ENCODE measurements at regions of chr20 and their contacts with region 1.

Region 1: DNA sequence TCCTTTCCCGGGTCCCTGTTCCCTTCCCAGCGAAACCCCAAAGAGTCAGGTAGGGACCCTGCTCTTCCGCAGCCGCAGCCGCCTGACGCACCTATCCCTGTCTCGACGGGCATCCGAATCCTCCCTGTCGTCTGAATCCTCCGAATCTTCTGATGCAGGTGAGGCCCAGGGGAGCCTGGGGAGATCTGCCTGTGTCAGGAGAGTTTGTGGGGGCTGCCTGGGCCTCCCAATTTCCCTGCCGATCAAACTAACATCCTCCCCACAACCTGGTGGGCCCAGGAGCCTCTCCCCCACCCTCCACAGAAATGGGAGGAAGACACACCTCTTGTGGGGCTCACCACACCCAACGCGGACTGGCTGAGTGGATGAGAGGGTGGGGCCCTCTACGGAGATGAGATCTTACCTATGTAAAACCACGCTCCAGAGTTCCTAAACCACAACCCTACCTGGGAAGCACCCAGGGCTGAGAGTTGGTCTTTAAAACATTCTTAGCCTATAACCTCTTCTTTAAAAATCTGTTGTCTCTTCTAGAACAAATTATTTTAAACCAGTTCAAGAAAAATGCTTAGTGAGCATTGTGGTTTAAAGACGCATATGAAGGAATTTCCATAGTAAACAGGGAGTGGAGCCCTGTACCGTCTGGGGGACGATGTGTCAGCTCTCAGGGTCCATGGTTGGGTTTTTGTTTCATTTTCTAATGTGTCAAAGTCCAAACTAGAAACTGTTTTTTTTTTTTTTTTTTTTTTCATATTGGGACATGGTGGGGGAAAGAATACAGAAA is 1.7 kb downstream of the CDC25B start:
- DNase-seq: peak; percentile 67
- ATAC-seq: no peak
- H3K4me3 ChIP-seq: peak overlapping the region; percentile 82
- H3K27ac ChIP-seq: peak overlapping the region; percentile 86
- H3K4me1 ChIP-seq: peaks cover 26% of the 10 kb centered on the region
- H3K27me3 ChIP-seq: no peaks in the 10 kb centered on the region
- CTCF ChIP-seq: no peak
- POLR2A ChIP-seq: no peak
- RAD21 ChIP-seq: no peak

Region 2: DNA sequence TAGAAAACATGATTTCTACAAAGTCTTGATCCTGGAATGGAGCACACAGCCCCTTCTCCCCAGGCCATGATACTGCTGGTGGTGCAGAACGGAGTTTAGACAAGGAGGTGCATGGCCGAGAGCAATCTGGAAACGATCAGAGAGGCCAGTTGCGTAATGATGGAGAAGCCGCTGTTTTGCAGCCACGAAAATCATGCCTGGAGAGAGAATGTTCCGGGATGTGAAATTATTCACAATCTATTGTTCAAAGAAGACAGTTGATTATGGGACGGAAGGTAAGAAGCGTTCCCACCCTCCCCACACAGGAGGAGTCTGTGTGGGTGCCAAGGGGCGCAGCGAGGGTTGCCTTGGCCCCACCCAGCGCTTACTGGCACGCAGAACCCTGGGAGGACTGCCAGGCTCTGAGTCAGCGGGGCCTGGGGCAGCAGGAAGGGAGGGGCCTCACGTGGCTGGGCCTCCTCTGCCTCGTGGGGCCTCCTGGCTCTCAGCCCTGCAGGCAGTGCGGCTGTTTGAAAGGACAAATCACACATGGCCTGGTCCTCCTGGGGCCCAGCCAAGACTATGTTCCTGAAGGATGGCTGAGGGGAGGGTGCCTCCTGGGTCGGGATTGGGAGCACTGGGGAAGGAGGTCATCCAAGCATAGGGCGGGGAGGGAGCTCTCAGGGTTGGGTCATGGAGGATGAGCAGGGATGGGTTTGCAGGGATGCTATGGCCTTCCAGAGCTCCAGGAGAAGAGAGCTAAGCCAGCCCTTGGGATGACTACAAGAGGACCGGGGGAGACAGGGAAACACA is 13.9 kb after region 1 on chr20:
- CTCF ChIA-PET with region 1: no interaction called
- POLR2A ChIA-PET with region 1: interaction called, 3 read pairs
- dilution Hi-C with region 1: no loop called
- in situ Hi-C with region 1: no loop called
- intact Hi-C with region 1: loop called (anchors 2 kb)
- DNase-seq: peak; percentile 99
- ATAC-seq: peak; percentile 70
- H3K4me3 ChIP-seq: peak overlapping the region; percentile 14; the same call in 1 of the 2 replicates
- H3K27ac ChIP-seq: peak overlapping the region; percentile 91
- H3K4me1 ChIP-seq: peaks cover 25% of the 10 kb centered on the region
- H3K27me3 ChIP-seq: no peaks in the 10 kb centered on the region
- CTCF ChIP-seq: no peak
- POLR2A ChIP-seq: 0 out of 2 replicates have a peak, but pooled peaks have one; percentile 64
- RAD21 ChIP-seq: no peak

Region 3: DNA sequence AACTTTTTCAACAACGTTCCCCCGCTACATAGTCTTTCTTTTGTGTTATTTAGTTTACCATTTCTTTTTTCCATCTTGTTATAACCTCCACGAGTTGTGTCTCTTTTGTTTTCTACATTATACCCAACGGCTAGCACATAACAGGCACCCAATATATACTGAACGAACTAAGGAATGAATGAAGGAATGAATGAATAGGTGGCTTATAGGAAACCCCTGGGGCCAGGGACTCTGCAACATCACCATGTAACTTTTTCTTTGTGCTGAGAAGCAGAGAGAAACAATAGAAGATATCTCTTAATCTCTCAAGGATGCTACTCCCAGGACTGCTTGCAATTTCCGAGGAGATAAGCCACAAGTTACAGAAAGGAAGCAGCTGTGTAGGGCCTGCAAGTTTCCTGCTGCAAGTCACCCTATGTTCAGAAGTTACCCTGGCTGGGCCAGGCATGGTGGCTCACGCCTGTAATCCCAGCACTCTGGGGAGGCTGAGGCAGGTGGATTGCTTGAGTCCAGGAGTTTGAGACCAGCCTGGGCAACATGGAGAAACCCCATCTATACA is 41.5 kb after region 1 on chr20:
- CTCF ChIA-PET with region 1: no interaction called
- POLR2A ChIA-PET with region 1: interaction called, 12 read pairs
- dilution Hi-C with region 1: no loop called
- in situ Hi-C with region 1: no loop called
- intact Hi-C with region 1: no loop called
- DNase-seq: no peak
- ATAC-seq: no peak
- H3K4me3 ChIP-seq: no peak overlapping the region
- H3K27ac ChIP-seq: no peak overlapping the region
- H3K4me1 ChIP-seq: peaks cover 3% of the 10 kb centered on the region
- H3K27me3 ChIP-seq: no peaks in the 10 kb centered on the region
- CTCF ChIP-seq: no peak
- POLR2A ChIP-seq: no peak
- RAD21 ChIP-seq: no peak

Measured in IMR-90 (cell line).